ENCODE measurements at regions of chr1 and their contacts with region 1.

Region 1: DNA sequence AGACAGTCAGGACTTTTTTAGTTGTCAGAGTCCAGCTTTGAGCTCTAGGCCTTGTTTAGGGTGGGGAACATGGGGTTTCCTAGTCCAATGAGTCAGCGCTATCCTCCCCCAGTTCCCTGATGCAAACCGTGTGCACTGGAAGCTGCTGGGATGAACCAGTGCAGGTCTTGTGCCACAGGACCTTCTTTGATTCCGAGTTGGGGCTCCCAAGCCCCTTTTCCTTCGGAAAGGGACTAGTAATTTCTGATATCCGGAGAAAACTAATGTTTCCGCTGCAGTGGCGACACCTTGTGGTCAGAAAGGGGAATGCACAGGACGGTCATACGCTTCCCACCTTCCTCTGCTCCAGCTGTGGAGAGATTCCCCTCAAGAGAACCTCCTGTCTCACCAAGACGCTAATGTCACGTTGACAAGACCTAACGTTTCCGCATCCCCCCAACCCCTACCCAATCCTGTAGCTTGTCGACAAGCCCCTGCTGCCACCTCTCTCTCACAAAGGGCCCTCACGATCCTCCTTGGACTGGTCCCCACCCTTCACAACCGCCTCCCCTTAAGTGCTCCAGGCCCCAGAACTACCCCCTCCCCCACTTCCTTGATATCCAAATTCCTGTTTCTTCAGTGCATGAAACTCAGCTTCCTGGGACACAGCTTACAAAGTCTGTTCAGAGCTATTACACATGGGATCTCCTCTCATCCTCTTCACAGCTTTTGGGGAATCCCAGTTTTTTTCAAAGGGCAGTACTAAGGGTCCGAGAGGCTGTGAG is 30.9 kb downstream of the GPA33 start:
- DNase-seq: peak; percentile 73
- H3K4me3 Mint-ChIP-seq: no peak overlapping the region
- H3K27ac Mint-ChIP-seq: peak overlapping the region; percentile 4
- H3K4me1 Mint-ChIP-seq: peaks cover 20% of the 10 kb centered on the region
- H3K27me3 Mint-ChIP-seq: no peaks in the 10 kb centered on the region

Region 2: DNA sequence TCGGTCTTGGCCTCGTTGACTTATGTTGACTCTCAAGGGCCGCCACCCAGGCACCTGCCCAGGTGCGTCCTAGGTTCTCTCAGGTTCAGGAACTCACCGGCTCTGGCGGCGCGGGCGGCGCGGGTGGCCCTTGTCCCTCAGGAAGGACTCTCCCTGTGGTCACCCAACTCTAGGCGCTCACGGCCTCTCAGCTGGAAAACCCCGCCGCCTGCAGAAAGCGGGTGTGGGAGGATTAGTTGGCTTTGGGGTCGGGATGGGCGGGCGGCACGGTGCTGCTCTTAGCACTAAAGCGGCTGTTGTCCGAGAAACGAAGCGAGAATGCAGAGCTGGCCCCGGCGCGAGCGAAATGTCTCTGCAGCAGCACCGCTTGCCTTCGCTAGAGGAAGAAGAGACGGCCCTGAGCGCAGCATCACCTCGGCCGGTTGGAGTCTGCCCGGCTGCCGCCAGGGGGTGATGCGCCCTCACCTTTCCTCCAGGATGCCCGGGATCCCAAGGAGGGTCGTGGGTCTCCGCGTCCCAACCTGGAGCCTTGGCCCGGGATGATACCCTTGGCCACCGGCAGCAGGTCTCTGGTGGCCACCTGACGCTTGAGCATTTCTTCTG is 175.1 kb before region 1 on chr1:
- CTCF ChIA-PET with region 1: interaction called, 26 read pairs
- POLR2A ChIA-PET with region 1: no interaction called
- DNase-seq: peak; percentile 43
- H3K4me3 Mint-ChIP-seq: no peak overlapping the region
- H3K27ac Mint-ChIP-seq: no peak overlapping the region
- H3K4me1 Mint-ChIP-seq: peaks cover 21% of the 10 kb centered on the region
- H3K27me3 Mint-ChIP-seq: peaks cover 20% of the 10 kb centered on the region

Region 3: DNA sequence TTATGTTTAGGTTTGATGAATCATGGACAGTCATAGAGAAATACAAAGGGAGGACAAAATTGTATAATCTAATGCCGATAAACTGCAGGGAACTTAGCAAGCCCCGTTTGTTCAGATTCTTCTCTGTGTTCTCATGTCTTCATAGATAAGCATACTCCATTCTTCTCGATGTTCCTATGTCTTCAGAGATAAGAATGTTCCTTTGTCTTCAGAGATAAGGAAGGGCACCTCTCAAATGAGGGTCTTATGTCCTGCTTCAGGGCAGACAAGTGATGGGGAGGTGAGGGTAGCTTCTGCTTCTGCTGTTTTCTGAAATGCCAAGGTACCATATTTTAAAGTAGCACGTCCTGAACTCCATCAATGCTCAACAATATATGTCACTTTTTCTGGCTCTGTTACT is 163.4 kb before region 1 on chr1:
- CTCF ChIA-PET with region 1: interaction called, 25 read pairs
- POLR2A ChIA-PET with region 1: no interaction called
- DNase-seq: no peak
- H3K4me3 Mint-ChIP-seq: no peak overlapping the region
- H3K27ac Mint-ChIP-seq: no peak overlapping the region
- H3K4me1 Mint-ChIP-seq: no peaks in the 10 kb centered on the region
- H3K27me3 Mint-ChIP-seq: peaks cover 45% of the 10 kb centered on the region

Region 4: GRCh38 chr1:167121375-167122120 is 62.3 kb after region 1 on chr1:
- CTCF ChIA-PET with region 1: interaction called, 13 read pairs
- POLR2A ChIA-PET with region 1: no interaction called
- DNase-seq: peak; percentile 18
- H3K4me3 Mint-ChIP-seq: peak overlapping the region; percentile 70
- H3K27ac Mint-ChIP-seq: peak overlapping the region; percentile 62
- H3K4me1 Mint-ChIP-seq: peaks cover 9% of the 10 kb centered on the region
- H3K27me3 Mint-ChIP-seq: peaks cover 1% of the 10 kb centered on the region

Region 5: GRCh38 chr1:167132301-167133010 is 73.2 kb after region 1 on chr1:
- CTCF ChIA-PET with region 1: no interaction called
- POLR2A ChIA-PET with region 1: no interaction called
- DNase-seq: no peak
- H3K4me3 Mint-ChIP-seq: no peak overlapping the region
- H3K27ac Mint-ChIP-seq: no peak overlapping the region
- H3K4me1 Mint-ChIP-seq: no peaks in the 10 kb centered on the region
- H3K27me3 Mint-ChIP-seq: peaks cover 37% of the 10 kb centered on the region

Region 6: DNA sequence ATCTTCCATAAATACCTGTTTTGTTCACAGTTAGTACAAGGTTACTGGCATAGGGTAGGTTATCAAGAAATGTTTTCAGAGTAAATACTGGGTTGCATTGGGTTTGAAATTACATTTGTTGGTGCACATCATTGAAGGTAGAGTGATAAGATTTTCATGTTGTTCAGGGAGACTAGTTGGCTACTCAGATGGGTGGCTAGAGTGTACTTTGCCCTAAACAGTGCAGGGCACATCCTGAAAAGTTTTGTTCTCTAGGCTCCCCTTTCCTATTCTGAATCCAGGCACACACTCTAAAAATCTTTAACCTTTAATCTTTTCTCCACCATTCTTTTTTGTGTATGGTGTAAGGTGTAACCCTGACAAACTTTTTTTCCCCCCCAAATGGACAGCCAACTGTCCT is 179.5 kb after region 1 on chr1:
- CTCF ChIA-PET with region 1: no interaction called
- POLR2A ChIA-PET with region 1: no interaction called
- DNase-seq: no peak
- H3K4me3 Mint-ChIP-seq: no peak overlapping the region
- H3K27ac Mint-ChIP-seq: no peak overlapping the region
- H3K4me1 Mint-ChIP-seq: peaks cover 8% of the 10 kb centered on the region
- H3K27me3 Mint-ChIP-seq: no peaks in the 10 kb centered on the region

Region 7: GRCh38 chr1:167263819-167264464 is 204.7 kb after region 1 on chr1:
- CTCF ChIA-PET with region 1: no interaction called
- POLR2A ChIA-PET with region 1: no interaction called
- DNase-seq: no peak
- H3K4me3 Mint-ChIP-seq: no peak overlapping the region
- H3K27ac Mint-ChIP-seq: no peak overlapping the region
- H3K4me1 Mint-ChIP-seq: peaks cover 27% of the 10 kb centered on the region
- H3K27me3 Mint-ChIP-seq: no peaks in the 10 kb centered on the region

Measured in activated CD4-positive, alpha-beta T cell treated with anti-CD3 and anti-CD28 coated beads, Interleukin-2, amount 10 ng/mL, durations not matched to agents 7 days and 5 days (primary cell).